Activated CD4-positive, alpha-beta T cell treated with anti-CD3 and anti-CD28 coated beads for 36 hours (primary cell): ENCODE measurements at regions of chr5 and their contacts with region 1.

Region 1: DNA sequence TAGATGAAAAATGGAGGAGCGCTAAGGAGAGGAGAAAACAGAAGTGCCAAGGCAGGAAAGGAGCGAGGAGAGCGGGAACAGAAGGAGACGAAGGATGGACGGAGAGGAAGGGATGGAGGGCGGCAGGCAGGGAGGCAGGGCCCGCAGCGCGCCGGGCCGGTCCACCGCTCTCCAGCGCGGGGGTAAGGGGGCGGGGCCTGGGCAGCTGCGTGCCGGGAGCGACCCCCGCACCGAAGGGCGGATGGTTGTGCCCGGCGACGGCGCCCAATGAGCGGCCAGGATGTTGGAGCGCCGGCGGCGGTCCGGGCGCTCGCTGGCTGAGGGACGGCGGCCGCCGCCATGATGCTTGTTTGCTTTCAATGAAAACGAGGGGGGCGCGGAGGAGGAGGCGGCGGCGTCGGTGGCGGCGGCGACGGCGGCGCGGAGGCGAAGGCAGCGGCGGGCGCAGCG is at the start of gene CNOT6:
- DNase-seq: peak; percentile 96
- ATAC-seq: peak; percentile 93
- H3K4me3 Mint-ChIP-seq: peak within 1 kb of the TSS; percentile 78
- H3K27ac Mint-ChIP-seq: peak within 1 kb of the TSS; percentile 87
- H3K4me1 Mint-ChIP-seq: peaks cover 32% of the 10 kb centered on the region
- H3K27me3 Mint-ChIP-seq: no peaks in the 10 kb centered on the region
- total RNA-seq, gene CNOT6: 34.4 to 43.2 TPM

Region 2: GRCh38 chr5:179559284-179560252 is 934.5 kb before region 1 on chr5:
- CTCF ChIA-PET with region 1: no interaction called
- POLR2A ChIA-PET with region 1: no interaction called
- intact Hi-C with region 1: loop called in 1 of 2 experiments (anchors 10 kb)
- DNase-seq: peak; percentile 97
- ATAC-seq: peak; percentile 100
- H3K4me3 Mint-ChIP-seq: peak overlapping the region; percentile 82
- H3K27ac Mint-ChIP-seq: peak overlapping the region; percentile 80
- H3K4me1 Mint-ChIP-seq: peaks cover 17% of the 10 kb centered on the region
- H3K27me3 Mint-ChIP-seq: no peaks in the 10 kb centered on the region

Region 3: GRCh38 chr5:179858586-179859427 is 635.3 kb before region 1 on chr5 and contains the start of gene MRNIP:
- CTCF ChIA-PET with region 1: no interaction called
- POLR2A ChIA-PET with region 1: no interaction called
- intact Hi-C with region 1: loop called in 1 of 2 experiments (anchors 1 kb)
- DNase-seq: peak; percentile 95
- ATAC-seq: peak; percentile 98
- H3K4me3 Mint-ChIP-seq: peak within 1 kb of the TSS; percentile 84
- H3K27ac Mint-ChIP-seq: peak within 1 kb of the TSS; percentile 85
- H3K4me1 Mint-ChIP-seq: peaks cover 6% of the 10 kb centered on the region
- H3K27me3 Mint-ChIP-seq: no peaks in the 10 kb centered on the region
- total RNA-seq, gene MRNIP: 19.4 to 19.7 TPM

Region 4: GRCh38 chr5:180563994-180564393 is 69.9 kb after region 1 on chr5:
- CTCF ChIA-PET with region 1: interaction called, 3 read pairs
- POLR2A ChIA-PET with region 1: no interaction called
- intact Hi-C with region 1: loop called in 1 of 2 experiments (anchors 1 kb)
- DNase-seq: peak; percentile 49
- ATAC-seq: peak; percentile 50
- H3K4me3 Mint-ChIP-seq: no peak overlapping the region
- H3K27ac Mint-ChIP-seq: no peak overlapping the region
- H3K4me1 Mint-ChIP-seq: peaks cover 35% of the 10 kb centered on the region
- H3K27me3 Mint-ChIP-seq: no peaks in the 10 kb centered on the region

Region 5: DNA sequence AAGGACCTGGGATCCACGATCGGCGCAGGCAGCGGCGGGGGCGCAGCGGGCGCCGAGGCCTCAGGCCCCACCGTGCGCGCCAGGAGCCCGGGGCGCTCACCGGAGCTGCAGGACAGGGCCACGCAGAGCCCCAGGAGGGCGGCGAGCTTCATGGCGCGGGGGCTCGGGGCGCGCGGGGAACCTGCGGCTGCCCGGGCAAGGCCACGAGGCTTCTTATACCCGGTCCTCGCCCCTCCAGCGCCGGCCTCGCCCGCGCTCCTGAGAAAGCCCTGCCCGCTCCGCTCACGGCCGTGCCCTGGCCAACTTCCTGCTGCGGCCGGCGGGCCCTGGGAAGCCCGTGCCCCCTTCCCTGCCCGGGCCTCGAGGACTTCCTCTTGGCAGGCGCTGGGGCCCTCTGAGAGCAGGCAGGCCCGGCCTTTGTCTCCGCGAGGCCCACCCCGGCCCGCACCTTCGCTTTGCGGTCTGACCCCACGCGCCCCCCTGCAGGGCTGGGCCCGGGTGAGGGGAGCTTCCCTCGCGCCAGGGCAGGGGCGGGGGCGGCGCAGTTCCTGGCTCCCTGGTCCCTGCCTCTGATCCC is 97.3 kb after region 1 on chr5 and contains the start of gene SCGB3A1:
- CTCF ChIA-PET with region 1: no interaction called
- POLR2A ChIA-PET with region 1: no interaction called
- intact Hi-C with region 1: no loop called
- DNase-seq: no peak
- ATAC-seq: no peak
- H3K4me3 Mint-ChIP-seq: no peak within 1 kb of the TSS
- H3K27ac Mint-ChIP-seq: no peak within 1 kb of the TSS
- H3K4me1 Mint-ChIP-seq: peaks cover 4% of the 10 kb centered on the region
- H3K27me3 Mint-ChIP-seq: peaks cover 33% of the 10 kb centered on the region
- total RNA-seq, gene SCGB3A1: not detected

Region 6: DNA sequence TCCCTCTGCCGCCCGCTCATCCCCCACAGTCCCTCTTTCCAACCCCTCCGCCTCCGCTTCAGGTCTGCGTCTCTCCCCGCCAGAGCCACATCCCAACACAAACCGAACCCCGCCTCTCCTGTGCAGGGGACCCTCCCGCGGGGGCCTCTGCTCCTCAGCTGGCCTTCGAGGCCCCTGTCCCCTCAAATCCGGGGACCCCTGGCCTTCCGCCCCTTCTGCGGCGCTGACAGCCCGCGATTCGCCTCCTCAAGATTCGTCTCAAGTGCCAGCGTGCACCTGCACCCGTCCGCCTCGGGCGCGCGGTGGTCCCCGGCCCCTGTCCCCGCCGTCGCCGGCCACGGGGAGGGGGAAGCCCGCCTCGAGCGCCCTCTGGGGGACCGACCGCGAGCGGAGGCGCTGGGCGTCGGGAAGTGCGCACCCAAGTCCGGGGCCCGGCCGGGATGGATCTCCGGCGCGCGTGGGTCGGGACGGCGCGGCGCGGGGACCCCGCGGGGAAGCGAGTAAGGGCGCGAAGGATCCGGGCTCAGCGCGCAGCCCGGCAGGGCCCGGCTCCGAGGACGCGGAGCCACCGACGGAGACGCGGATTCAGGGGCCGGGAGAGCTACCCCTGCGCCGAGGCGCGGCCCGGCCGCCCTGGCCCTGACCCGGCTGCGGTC is 154.7 kb after region 1 on chr5:
- CTCF ChIA-PET with region 1: no interaction called
- POLR2A ChIA-PET with region 1: no interaction called
- intact Hi-C with region 1: loop called in 1 of 2 experiments (anchors 1 kb)
- DNase-seq: peak; percentile 45
- ATAC-seq: peak; percentile 31
- H3K4me3 Mint-ChIP-seq: peak overlapping the region; percentile 56
- H3K27ac Mint-ChIP-seq: no peak overlapping the region
- H3K4me1 Mint-ChIP-seq: peaks cover 7% of the 10 kb centered on the region
- H3K27me3 Mint-ChIP-seq: peaks cover 34% of the 10 kb centered on the region

Region 7: GRCh38 chr5:181243512-181244343 is 749.6 kb after region 1 on chr5 and contains the start of gene RACK1:
- CTCF ChIA-PET with region 1: no interaction called
- POLR2A ChIA-PET with region 1: no interaction called
- intact Hi-C with region 1: loop called in 1 of 2 experiments (anchors 2 kb)
- DNase-seq: peak; percentile 94
- ATAC-seq: peak; percentile 70
- H3K4me3 Mint-ChIP-seq: peak within 1 kb of the TSS; percentile 91
- H3K27ac Mint-ChIP-seq: peak within 1 kb of the TSS; percentile 99
- H3K4me1 Mint-ChIP-seq: peaks cover 50% of the 10 kb centered on the region
- H3K27me3 Mint-ChIP-seq: no peaks in the 10 kb centered on the region
- total RNA-seq, gene RACK1: 2,724 to 3,901 TPM